GM10248 (cell line): ENCODE measurements at regions of chr4 and their contacts with region 1.

Region 1: GRCh38 chr4:116358588-116359222 is 726.7 kb downstream of the TRAM1L1 start:
- DNase-seq: peak; percentile 43
- CTCF ChIP-seq: peak; percentile 79

Region 2: DNA sequence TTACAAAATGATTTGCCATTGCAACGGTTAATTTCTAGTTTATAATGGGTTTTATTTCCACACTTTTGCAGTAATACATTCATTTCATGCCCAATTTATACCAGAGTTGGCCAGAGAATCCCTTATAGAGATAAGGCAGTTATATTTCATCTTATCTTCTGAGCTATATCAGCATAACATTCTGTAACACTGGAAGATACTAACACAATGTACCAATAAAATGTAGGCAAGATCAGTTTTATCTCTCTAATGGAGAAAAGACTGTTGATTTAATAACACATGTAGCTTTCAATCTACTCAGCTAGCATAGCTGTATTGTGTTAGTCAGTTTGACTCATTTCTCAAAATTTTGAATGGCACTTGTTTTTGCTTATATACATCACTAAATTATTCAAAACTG is 12.0 kb before region 1 on chr4:
- CTCF ChIA-PET with region 1: interaction called, 12 read pairs
- POLR2A ChIA-PET with region 1: no interaction called
- DNase-seq: no peak
- CTCF ChIP-seq: no peak

Region 3: GRCh38 chr4:116374815-116375214 is 16.1 kb after region 1 on chr4:
- CTCF ChIA-PET with region 1: interaction called, 10 read pairs
- POLR2A ChIA-PET with region 1: no interaction called
- DNase-seq: no peak
- CTCF ChIP-seq: no peak